ENCODE measurements at regions of chr18 and their contacts with region 1.

Region 1: DNA sequence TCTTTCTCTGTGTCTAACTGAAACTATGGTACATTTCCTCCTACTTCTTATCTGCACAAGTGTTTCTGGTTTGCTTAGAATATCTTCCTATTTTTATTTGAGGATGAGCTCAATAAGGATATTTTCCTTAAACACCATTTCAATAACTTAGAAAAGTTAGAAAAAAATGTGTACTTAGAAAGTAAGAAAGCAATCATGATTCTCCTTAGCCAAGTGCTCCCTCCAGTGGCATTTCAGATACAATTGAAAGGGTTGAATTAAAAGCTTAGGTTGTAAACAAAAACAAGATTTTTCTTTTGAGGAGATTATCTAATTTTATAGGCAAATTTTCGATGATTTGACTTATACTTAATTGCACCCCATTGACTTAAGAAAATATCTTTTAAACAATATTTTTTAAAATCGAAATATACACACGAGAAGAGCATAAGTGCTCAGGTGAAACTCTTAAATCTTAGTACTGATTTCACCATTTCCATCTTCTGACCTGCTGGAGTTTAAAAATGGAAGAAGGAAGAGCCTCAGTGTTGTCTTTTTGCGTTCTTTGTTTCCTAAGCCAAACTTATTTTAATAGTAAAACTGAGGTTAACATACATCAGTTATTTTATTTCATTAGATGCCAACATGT is 26.9 kb downstream of the C18orf63 start:
- DNase-seq: peak; percentile 75
- ATAC-seq: no peak
- H3K4me3 ChIP-seq: no peak overlapping the region
- H3K27ac ChIP-seq: no peak overlapping the region
- H3K4me1 ChIP-seq: no peaks in the 10 kb centered on the region
- H3K27me3 ChIP-seq: no peaks in the 10 kb centered on the region
- CTCF ChIP-seq: peak; percentile 87

Region 2: GRCh38 chr18:72700961-72701718 is 1641.4 kb before region 1 on chr18:
- CTCF ChIA-PET with region 1: no interaction called
- POLR2A ChIA-PET with region 1: no interaction called
- intact Hi-C with region 1: loop called (anchors 5 kb)
- DNase-seq: peak; percentile 63
- ATAC-seq: peak; percentile 46; the same call in 1 of the 2 replicates
- H3K4me3 ChIP-seq: no peak overlapping the region
- H3K27ac ChIP-seq: no peak overlapping the region
- H3K4me1 ChIP-seq: no peaks in the 10 kb centered on the region
- H3K27me3 ChIP-seq: no peaks in the 10 kb centered on the region
- CTCF ChIP-seq: peak; percentile 77

Region 3: DNA sequence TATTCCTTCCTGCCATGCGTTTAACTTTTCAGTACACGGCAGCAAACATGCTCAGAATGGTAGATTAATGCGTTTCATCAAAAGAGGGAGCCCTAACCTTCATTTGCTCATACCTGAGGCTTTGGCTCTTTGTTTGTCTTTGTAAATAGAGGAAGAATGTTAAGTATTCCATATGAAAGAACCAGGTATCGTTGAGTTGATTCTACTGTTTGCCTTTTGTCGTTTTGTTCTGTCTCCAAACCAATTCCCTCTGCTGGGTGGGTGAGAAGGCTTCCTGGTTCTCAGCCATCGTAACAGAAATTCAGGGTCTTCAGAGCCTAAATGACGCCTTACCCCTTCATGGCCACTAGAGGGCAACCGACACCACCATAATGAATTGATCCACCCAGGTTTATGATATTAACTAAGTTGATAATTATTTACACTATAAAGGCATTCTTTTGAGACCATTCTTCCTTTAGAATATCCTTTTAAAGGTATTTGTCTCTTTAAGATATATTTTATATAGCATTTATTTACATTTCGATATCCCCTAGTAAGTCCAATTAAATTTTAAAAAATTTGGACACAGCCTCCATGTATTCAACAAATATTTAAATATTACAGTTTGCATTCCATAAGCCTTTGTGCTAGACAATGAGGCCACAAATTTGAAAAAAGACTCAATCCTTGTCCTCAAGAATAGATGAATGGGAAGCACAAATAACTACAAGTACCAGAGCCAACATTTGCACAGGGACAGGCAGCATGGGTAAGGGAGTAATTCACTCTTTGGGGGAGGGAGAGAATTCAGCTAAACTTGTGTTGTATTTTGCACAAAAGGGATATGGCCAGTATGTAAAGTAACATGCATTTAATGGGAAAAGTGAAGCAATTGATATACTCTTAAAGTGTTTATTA is 146.1 kb before region 1 on chr18:
- CTCF ChIA-PET with region 1: interaction called, 7 read pairs
- POLR2A ChIA-PET with region 1: no interaction called
- intact Hi-C with region 1: loop called (anchors 1 kb)
- DNase-seq: peak; percentile 75
- ATAC-seq: peak; percentile 90
- H3K4me3 ChIP-seq: peak overlapping the region; percentile 67
- H3K27ac ChIP-seq: no peak overlapping the region
- H3K4me1 ChIP-seq: no peaks in the 10 kb centered on the region
- H3K27me3 ChIP-seq: no peaks in the 10 kb centered on the region
- CTCF ChIP-seq: peak; percentile 96

Region 4: DNA sequence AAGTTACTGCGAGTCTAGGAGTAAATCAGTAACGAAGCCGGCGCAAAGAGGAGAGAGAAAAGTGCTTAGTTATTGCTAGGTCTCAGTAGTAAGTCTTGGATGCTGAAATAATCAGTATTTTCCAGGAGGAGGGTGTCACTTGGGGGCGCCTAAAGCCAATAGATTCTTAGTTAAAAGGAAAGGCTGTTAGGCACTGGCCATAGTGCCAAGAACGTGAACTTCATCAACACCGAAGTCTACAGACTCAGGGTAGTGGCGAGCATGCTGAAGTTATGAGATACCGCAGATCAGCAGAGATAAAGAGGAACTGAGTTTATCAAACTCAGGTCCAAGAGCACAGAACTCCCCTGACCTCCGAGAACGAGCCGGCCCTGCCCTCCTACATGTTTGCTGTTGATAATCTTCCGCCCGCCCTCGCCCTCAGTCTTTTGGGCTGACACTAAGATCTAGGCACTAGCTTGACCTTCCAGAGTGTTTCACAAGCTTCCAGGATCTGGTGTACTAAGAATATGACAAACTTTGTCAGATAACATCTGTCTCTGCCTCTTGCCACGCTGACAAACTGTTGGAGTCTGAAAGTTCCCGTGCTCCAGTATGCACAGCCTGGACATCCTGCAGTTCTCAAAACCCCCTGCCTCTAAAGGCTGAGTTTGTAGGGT is 100.0 kb before region 1 on chr18:
- CTCF ChIA-PET with region 1: no interaction called
- POLR2A ChIA-PET with region 1: no interaction called
- intact Hi-C with region 1: loop called (anchors 5 kb)
- DNase-seq: peak; percentile 26
- ATAC-seq: peak; percentile 37; the same call in 1 of the 2 replicates
- H3K4me3 ChIP-seq: no peak overlapping the region
- H3K27ac ChIP-seq: no peak overlapping the region
- H3K4me1 ChIP-seq: no peaks in the 10 kb centered on the region
- H3K27me3 ChIP-seq: no peaks in the 10 kb centered on the region
- CTCF ChIP-seq: 0 out of 2 replicates have a peak, but pooled peaks have one; percentile 23

Region 5: GRCh38 chr18:74310411-74310810 is 32.1 kb before region 1 on chr18:
- CTCF ChIA-PET with region 1: no interaction called
- POLR2A ChIA-PET with region 1: no interaction called
- intact Hi-C with region 1: loop called (anchors 1 kb)
- DNase-seq: peak; percentile 69
- ATAC-seq: peak; percentile 100
- H3K4me3 ChIP-seq: no peak overlapping the region
- H3K27ac ChIP-seq: no peak overlapping the region
- H3K4me1 ChIP-seq: no peaks in the 10 kb centered on the region; the same call in 1 of the 2 replicates
- H3K27me3 ChIP-seq: no peaks in the 10 kb centered on the region
- CTCF ChIP-seq: peak; percentile 64

Measured in PC-3 (cell line).